ENCODE measurements at regions of chr1 and their contacts with region 1.

Region 1: GRCh38 chr1:28248283-28249012 is 10.9 kb upstream of the SESN2 start:
- DNase-seq: no peak
- ATAC-seq: peak; percentile 53
- H3K4me3 ChIP-seq: peak overlapping the region; percentile 3; the same call in 1 of the 2 replicates
- H3K27ac ChIP-seq: peak overlapping the region; percentile 87
- H3K4me1 ChIP-seq: peaks cover 39% of the 10 kb centered on the region
- H3K27me3 ChIP-seq: no peaks in the 10 kb centered on the region
- CTCF ChIP-seq: peak; percentile 86 to 98 (median 91)
- EP300 ChIP-seq: no peak
- POLR2A ChIP-seq: 0 out of 2 replicates have a peak, but pooled peaks have one; percentile 13
- RAD21 ChIP-seq: peak; percentile 87

Region 2: DNA sequence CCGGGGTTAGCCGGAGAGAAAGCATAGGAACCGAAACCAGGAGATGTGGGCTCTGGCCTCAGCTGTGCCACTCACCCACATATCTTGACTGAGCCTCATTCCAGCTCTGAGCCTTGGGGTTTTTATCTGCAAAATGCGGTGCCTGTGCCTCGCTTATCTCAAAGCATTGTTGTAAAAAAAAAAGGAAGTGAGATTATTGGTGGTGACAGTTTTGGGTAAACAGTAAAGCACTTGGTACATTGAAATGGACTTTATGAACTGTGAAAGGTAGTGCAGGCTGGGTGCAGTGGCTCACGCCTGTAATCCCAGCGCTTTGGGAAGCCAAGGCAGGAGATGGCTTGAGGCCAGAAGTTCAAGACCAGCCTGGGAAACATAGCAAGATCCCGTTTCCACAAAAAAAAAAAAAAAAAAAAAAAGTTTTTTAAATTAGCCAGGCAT is 75.7 kb before region 1 on chr1:
- CTCF ChIA-PET with region 1: no interaction called
- POLR2A ChIA-PET with region 1: interaction called, 5 read pairs
- RAD21 ChIA-PET with region 1: interaction called, 12 read pairs
- SMC1A ChIA-PET with region 1: interaction called, 6 read pairs
- in situ Hi-C with region 1: no loop called
- intact Hi-C with region 1: loop called (anchors 2 kb)
- DNase-seq: peak; percentile 98
- ATAC-seq: peak; percentile 59
- H3K4me3 ChIP-seq: 0 out of 2 replicates have a peak overlapping the region, but pooled peaks have one; percentile 30
- H3K27ac ChIP-seq: peak overlapping the region; percentile 69
- H3K4me1 ChIP-seq: peaks cover 82% of the 10 kb centered on the region
- H3K27me3 ChIP-seq: no peaks in the 10 kb centered on the region
- CTCF ChIP-seq: no peak
- EP300 ChIP-seq: peak; percentile 92 to 98
- POLR2A ChIP-seq: 0 out of 2 replicates have a peak, but pooled peaks have one; percentile 21
- RAD21 ChIP-seq: 0 out of 2 replicates have a peak, but pooled peaks have one; percentile 3

Region 3: DNA sequence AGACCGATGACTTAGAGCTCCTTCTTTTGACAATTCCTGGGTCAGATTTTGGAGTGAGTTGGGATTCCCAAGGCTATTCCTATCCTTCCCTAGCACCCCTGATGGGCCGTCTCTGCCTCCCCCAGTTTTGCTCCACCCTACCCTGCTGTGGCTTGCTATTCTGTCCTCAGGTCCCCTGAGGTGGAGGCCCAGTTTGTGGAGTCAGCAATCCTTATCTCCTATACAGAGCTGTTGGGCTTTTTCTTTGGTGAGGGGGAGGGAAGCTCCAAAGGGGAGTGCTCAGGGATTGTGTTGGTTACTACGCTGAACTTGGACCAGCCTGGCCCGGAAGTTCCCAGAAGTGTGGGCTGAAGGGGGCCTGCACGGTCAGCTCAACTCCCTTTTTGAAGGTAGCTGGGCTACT is 18.5 kb after region 1 on chr1:
- CTCF ChIA-PET with region 1: interaction called, 24 read pairs
- POLR2A ChIA-PET with region 1: interaction called, 51 read pairs
- RAD21 ChIA-PET with region 1: interaction called, 6 read pairs
- SMC1A ChIA-PET with region 1: interaction called, 14 read pairs
- in situ Hi-C with region 1: no loop called
- intact Hi-C with region 1: no loop called
- DNase-seq: no peak
- ATAC-seq: no peak
- H3K4me3 ChIP-seq: no peak overlapping the region
- H3K27ac ChIP-seq: no peak overlapping the region
- H3K4me1 ChIP-seq: no peaks in the 10 kb centered on the region
- H3K27me3 ChIP-seq: no peaks in the 10 kb centered on the region
- CTCF ChIP-seq: no peak
- EP300 ChIP-seq: no peak
- POLR2A ChIP-seq: no peak
- RAD21 ChIP-seq: no peak

Region 4: DNA sequence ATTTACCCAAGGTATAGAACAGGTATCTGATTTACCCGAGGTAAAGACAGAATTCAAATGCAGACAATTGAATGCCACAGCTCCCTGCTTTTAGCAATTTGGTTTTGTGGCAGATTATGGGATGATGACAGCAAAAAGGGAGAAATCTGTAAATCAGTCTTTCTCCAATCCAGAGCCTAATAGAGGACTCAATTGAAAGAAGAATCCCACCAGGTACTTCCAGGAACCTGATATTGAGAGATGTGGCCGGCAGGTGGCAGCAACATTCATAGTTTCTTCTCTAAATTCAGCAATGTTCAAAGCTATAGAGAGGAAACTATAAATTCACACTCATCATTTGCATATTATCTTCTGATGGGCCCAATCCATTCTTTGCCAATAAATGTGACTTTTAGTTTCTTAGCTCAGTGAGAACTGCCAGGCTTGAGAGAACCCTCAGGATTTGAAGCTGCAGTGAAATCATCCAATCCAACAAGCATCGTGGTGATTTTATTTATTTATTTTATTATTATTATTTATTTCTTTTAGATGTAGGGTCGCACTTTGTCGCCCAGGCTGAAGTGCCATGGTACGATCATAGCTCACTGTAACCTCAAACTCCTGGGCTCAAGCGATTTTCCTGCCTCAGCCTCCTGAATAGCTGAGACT is 111.3 kb after region 1 on chr1:
- CTCF ChIA-PET with region 1: interaction called, 138 read pairs
- POLR2A ChIA-PET with region 1: interaction called, 5 read pairs
- RAD21 ChIA-PET with region 1: interaction called, 34 read pairs
- SMC1A ChIA-PET with region 1: interaction called, 38 read pairs
- in situ Hi-C with region 1: no loop called
- intact Hi-C with region 1: loop called (anchors 2 kb)
- DNase-seq: no peak
- ATAC-seq: peak; percentile 89
- H3K4me3 ChIP-seq: no peak overlapping the region
- H3K27ac ChIP-seq: no peak overlapping the region
- H3K4me1 ChIP-seq: no peaks in the 10 kb centered on the region
- H3K27me3 ChIP-seq: no peaks in the 10 kb centered on the region
- CTCF ChIP-seq: peak; percentile 65 to 73 (median 66)
- EP300 ChIP-seq: no peak
- POLR2A ChIP-seq: no peak
- RAD21 ChIP-seq: peak; percentile 57

Region 5: GRCh38 chr1:28505406-28506187 is 257.1 kb after region 1 on chr1 and contains the start of gene RCC1:
- CTCF ChIA-PET with region 1: interaction called, 16 read pairs
- POLR2A ChIA-PET with region 1: interaction called, 4 read pairs
- RAD21 ChIA-PET with region 1: interaction called, 6 read pairs
- SMC1A ChIA-PET with region 1: interaction called, 6 read pairs
- in situ Hi-C with region 1: no loop called
- intact Hi-C with region 1: loop called (anchors 1 kb)
- DNase-seq: peak; percentile 98
- ATAC-seq: peak; percentile 80
- H3K4me3 ChIP-seq: peak within 1 kb of the TSS; percentile 84
- H3K27ac ChIP-seq: peak within 1 kb of the TSS; percentile 94
- H3K4me1 ChIP-seq: peaks cover 10% of the 10 kb centered on the region
- H3K27me3 ChIP-seq: no peaks in the 10 kb centered on the region
- CTCF ChIP-seq: no peak
- EP300 ChIP-seq: no peak
- POLR2A ChIP-seq: peak; percentile 89
- RAD21 ChIP-seq: no peak
- polyA plus RNA-seq, gene RCC1: 8.3 to 15.2 TPM

Region 6: GRCh38 chr1:28815533-28816185 is 567.2 kb after region 1 on chr1:
- CTCF ChIA-PET with region 1: no interaction called
- POLR2A ChIA-PET with region 1: no interaction called
- RAD21 ChIA-PET with region 1: no interaction called
- SMC1A ChIA-PET with region 1: no interaction called
- in situ Hi-C with region 1: no loop called
- intact Hi-C with region 1: no loop called
- DNase-seq: no peak
- ATAC-seq: peak; percentile 31; the same call in 2 of the 3 replicates
- H3K4me3 ChIP-seq: no peak overlapping the region
- H3K27ac ChIP-seq: no peak overlapping the region
- H3K4me1 ChIP-seq: no peaks in the 10 kb centered on the region
- H3K27me3 ChIP-seq: peaks cover 0 to 1% of the 10 kb centered on the region in 2 experiments; a peak in 2 of 4 replicates
- CTCF ChIP-seq: no peak
- EP300 ChIP-seq: no peak
- POLR2A ChIP-seq: no peak
- RAD21 ChIP-seq: no peak

Region 7: DNA sequence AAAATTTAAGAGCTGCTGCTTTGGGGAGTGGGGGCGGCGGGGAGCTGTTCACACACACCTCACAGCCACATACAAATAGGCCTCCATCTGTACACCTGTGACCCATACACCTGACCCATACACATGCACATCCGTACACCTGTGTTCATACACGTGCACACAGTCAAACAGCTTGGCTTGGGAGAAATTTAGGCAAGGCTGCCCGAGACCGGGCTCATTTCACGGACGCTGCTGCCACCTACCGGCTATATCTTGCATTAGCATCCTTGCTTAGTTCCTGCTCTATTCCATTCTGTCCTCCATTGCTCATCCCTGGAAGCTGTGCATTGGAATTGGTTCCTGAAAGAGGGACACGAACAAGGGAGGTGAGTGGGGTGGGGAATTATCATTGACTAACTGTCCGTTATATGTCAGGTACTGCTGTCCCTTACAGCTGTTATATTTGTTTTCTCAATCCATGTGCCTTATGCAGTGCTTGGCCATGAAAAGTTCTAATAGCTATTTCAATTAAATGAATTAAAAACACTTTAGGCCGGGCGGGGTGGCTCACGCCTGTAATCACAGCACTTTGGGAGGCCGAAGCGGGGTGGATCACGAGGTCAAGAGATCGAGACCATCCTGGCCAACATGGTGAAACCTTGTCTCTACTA is 628.8 kb after region 1 on chr1:
- CTCF ChIA-PET with region 1: interaction called, 17 read pairs
- POLR2A ChIA-PET with region 1: no interaction called
- RAD21 ChIA-PET with region 1: interaction called, 7 read pairs
- SMC1A ChIA-PET with region 1: interaction called, 13 read pairs
- in situ Hi-C with region 1: no loop called
- intact Hi-C with region 1: no loop called
- DNase-seq: peak; percentile 28
- ATAC-seq: peak; percentile 84
- H3K4me3 ChIP-seq: no peak overlapping the region
- H3K27ac ChIP-seq: no peak overlapping the region
- H3K4me1 ChIP-seq: no peaks in the 10 kb centered on the region
- H3K27me3 ChIP-seq: no peaks in the 10 kb centered on the region
- CTCF ChIP-seq: peak; percentile 89 to 96 (median 93)
- EP300 ChIP-seq: no peak
- POLR2A ChIP-seq: no peak
- RAD21 ChIP-seq: peak; percentile 97